ENCODE measurements at regions of chr2 and their contacts with region 1.

Region 1: GRCh38 chr2:28751252-28751955 is at the start of gene PPP1CB:
- DNase-seq: peak; percentile 96 to 99
- H3K4me3 ChIP-seq: peak within 1 kb of the TSS; percentile 85 to 99
- H3K27ac ChIP-seq: peak within 1 kb of the TSS; percentile 99 to 100
- H3K4me1 ChIP-seq: peaks cover 0 to 69% (median 35%) of the 10 kb centered on the region in 4 donors
- H3K27me3 ChIP-seq: no peaks in the 10 kb centered on the region
- CTCF ChIP-seq: peak; percentile 27 to 43

Region 2: GRCh38 chr2:28594289-28595108 is 156.9 kb before region 1 on chr2:
- intact Hi-C with region 1: loop called (anchors 2 kb)
- DNase-seq: peak; percentile 92 to 94
- H3K4me3 ChIP-seq: no peak overlapping the region
- H3K27ac ChIP-seq: peak overlapping the region; percentile 83 to 90
- H3K4me1 ChIP-seq: peaks cover 0 to 53% (median 27%) of the 10 kb centered on the region in 4 donors
- H3K27me3 ChIP-seq: no peaks in the 10 kb centered on the region
- CTCF ChIP-seq: peak; percentile 81 to 94

Region 3: GRCh38 chr2:28624793-28625701 is 126.4 kb before region 1 on chr2:
- intact Hi-C with region 1: loop called (anchors 5 kb)
- DNase-seq: peak; percentile 78 to 93
- H3K4me3 ChIP-seq: peak overlapping the region; percentile 17 to 43
- H3K27ac ChIP-seq: peak overlapping the region; percentile 98
- H3K4me1 ChIP-seq: peaks cover 10 to 97% (median 84%) of the 10 kb centered on the region in 4 donors
- H3K27me3 ChIP-seq: no peaks in the 10 kb centered on the region
- CTCF ChIP-seq: peak in 1 of 2 experiments; percentile 23

Region 4: GRCh38 chr2:28665041-28665704 is 86.2 kb before region 1 on chr2:
- intact Hi-C with region 1: loop called (anchors 2 kb)
- DNase-seq: peak; percentile 83 to 94
- H3K4me3 ChIP-seq: peak overlapping the region; percentile 3 to 33
- H3K27ac ChIP-seq: peak overlapping the region; percentile 80 to 84
- H3K4me1 ChIP-seq: peaks cover 0 to 70% (median 54%) of the 10 kb centered on the region in 4 donors
- H3K27me3 ChIP-seq: no peaks in the 10 kb centered on the region
- CTCF ChIP-seq: no peak